ENCODE measurements at regions of chr19 and their contacts with region 1.

Region 1: DNA sequence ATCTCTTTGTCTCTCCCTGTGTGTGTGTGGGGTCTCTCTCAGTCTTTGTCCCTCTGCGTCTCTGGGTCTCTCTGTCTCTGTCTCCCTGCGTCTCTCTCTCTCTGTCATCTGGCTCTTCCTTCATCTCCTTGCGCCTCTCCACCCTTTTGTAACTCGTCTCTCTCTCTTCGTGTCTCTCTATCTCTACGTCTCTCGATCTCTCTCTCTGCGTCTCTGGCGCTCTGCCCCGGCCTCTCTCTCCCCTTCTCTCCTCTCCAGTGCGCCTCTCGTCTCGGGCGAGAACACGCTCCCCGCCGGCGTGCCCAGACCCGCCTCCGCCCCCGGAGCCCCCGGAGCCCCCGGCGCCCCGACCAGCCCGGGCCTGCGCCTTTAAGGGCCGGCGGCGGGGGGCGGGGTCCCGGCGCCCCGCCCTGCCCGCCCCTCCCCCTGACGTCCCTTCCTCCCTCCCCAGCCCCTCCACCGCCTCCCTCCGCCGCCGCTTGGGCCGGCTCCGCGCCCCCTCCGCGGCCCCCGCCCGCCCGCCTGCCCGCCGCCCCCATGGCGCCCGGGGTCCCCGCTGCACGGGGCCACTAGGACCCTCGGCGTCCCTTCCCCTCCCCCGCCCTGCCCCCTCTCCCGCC is at the start of gene MARK4:
- DNase-seq: no peak
- H3K4me3 ChIP-seq: peak within 1 kb of the TSS; percentile 78
- CTCF ChIP-seq: no peak

Region 2: GRCh38 chr19:45079063-45079910 is 171.7 kb before region 1 on chr19 and contains the start of gene GEMIN7:
- CTCF ChIA-PET with region 1: interaction called, 10 read pairs
- POLR2A ChIA-PET with region 1: no interaction called
- DNase-seq: no peak
- H3K4me3 ChIP-seq: peak within 1 kb of the TSS; percentile 97
- CTCF ChIP-seq: no peak

Region 3: GRCh38 chr19:45200568-45200994 is 50.4 kb before region 1 on chr19:
- CTCF ChIA-PET with region 1: interaction called, 19 read pairs
- POLR2A ChIA-PET with region 1: no interaction called
- DNase-seq: no peak
- H3K4me3 ChIP-seq: no peak overlapping the region
- CTCF ChIP-seq: peak; percentile 32

Region 4: DNA sequence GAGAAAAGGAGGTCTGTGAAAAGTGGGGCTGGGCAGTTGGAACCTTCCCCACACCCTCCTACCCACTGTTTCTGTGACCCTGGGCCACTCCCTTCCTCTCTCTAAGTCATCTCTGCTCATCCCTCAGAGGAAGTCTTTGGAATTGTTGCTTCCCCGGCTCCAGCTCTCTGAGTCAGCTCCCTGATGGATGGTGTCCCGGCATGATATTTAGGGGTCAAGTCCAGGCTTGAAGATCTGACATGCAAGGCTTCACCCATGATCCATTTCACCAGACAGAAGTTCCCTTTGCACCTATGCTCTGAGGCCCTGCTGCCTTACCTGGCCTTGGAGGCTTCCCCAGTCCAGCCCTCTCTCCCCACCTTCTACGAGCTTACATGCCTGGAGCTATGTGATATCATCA is 19.1 kb before region 1 on chr19:
- CTCF ChIA-PET with region 1: interaction called, 12 read pairs
- POLR2A ChIA-PET with region 1: no interaction called
- DNase-seq: no peak
- H3K4me3 ChIP-seq: no peak overlapping the region
- CTCF ChIP-seq: no peak

Region 5: DNA sequence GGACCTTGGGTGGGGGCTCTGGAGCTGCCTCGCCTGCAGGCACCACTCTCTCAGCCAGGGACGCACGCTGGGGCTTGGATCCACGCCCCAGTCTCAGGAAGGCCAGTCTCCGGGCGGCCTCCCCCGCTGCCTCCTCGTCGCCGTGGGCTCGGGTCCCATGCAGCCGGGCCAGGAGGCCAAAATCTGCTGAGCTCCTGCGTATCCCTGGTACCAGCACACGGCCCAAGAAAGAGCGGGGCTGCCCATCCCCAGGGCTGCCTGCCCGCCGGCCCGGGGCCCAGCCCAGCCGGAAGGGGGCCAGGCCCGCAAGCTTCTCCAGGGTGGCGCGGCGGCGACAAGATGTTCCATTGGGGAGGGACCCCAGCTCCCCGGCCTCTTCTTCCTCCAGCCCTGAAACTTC is 12.4 kb before region 1 on chr19:
- CTCF ChIA-PET with region 1: interaction called, 12 read pairs
- POLR2A ChIA-PET with region 1: no interaction called
- DNase-seq: no peak
- H3K4me3 ChIP-seq: no peak overlapping the region
- CTCF ChIP-seq: no peak